Endothelial cell of umbilical vein (primary cell): ENCODE measurements at regions of chr16 and their contacts with region 1.

Region 1: GRCh38 chr16:68128577-68129305 is 43.6 kb downstream of the NFATC3 start:
- DNase-seq: peak; percentile 31
- H3K4me3 ChIP-seq: no peak overlapping the region
- H3K27ac ChIP-seq: no peak overlapping the region
- H3K4me1 ChIP-seq: peaks cover 16% of the 10 kb centered on the region
- H3K27me3 ChIP-seq: no peaks in the 10 kb centered on the region
- CTCF ChIP-seq: no peak
- POLR2A ChIP-seq: no peak

Region 2: DNA sequence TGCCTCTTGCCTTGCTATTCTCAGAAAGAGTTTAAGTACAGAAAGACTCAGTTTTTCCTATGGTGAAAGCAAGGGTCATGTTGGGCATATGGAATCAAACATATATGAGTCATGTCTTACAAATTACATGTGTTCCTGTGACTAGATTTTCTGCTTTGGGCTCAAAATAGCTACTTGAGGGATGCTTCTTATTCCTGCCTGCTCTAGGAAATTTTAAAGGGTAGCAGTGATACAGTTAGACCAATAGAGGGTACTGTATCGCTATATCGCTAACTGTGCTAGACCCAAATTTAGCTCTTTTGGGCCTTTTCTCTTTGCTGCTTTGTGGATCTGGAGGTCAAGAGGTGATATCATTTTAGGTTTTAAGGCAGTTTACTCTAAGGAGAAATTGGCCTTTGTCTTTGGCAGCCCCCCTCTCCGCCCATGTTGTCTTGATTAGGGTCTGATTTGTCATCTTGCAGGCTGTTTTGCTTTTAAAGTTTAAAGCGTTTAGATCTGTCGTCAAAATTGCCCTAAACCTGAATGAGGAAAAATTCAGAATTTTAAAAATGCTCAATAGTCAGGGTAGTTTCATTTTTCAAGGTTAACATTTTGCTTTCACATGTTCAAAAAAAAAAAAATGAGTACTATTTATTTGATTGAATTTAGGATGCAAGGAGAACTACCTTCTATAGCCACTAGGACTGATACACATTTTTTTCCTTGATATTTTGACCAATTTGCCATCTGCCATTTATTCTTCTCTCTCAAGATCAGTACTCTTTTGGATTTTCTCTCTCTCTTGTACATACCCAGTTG is 34.7 kb before region 1 on chr16:
- CTCF ChIA-PET with region 1: interaction called, 13 read pairs
- POLR2A ChIA-PET with region 1: no interaction called
- dilution Hi-C with region 1: no loop called
- intact Hi-C with region 1: loop called (anchors 5 kb)
- DNase-seq: no peak
- H3K4me3 ChIP-seq: no peak overlapping the region
- H3K27ac ChIP-seq: no peak overlapping the region
- H3K4me1 ChIP-seq: peaks cover 3% of the 10 kb centered on the region
- H3K27me3 ChIP-seq: no peaks in the 10 kb centered on the region
- CTCF ChIP-seq: peak in 1 of 2 donors; percentile 30
- POLR2A ChIP-seq: no peak

Region 3: DNA sequence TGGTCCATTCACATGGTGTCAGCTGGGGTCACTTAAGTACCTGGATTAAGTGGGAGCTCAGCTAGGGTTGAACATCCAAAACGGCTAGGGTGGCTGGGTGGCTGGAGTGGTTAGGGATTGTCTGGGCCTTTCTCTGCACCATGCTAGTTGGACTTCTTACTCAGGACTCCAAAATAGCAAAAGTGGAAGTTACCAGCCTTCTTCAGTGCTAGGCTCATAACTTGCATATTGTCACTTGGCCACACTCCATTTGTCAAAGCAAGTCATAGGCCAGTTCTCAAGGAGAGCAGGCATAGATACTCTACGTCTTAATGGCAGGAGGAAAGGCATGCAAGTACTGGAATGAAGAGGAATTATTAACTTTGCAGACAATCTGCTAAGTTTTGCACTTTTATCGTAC is 37.5 kb after region 1 on chr16:
- CTCF ChIA-PET with region 1: no interaction called
- POLR2A ChIA-PET with region 1: no interaction called
- dilution Hi-C with region 1: no loop called
- intact Hi-C with region 1: loop called (anchors 5 kb)
- DNase-seq: no peak
- H3K4me3 ChIP-seq: no peak overlapping the region
- H3K27ac ChIP-seq: no peak overlapping the region
- H3K4me1 ChIP-seq: no peaks in the 10 kb centered on the region
- H3K27me3 ChIP-seq: no peaks in the 10 kb centered on the region
- CTCF ChIP-seq: no peak
- POLR2A ChIP-seq: no peak